ENCODE measurements at regions of chr10 and their contacts with region 1.

Region 1: GRCh38 chr10:31928549-31929260 is at the start of gene ARHGAP12:
- DNase-seq: peak; percentile 87
- H3K4me3 Mint-ChIP-seq: peak within 1 kb of the TSS; percentile 81
- H3K27ac Mint-ChIP-seq: peak within 1 kb of the TSS; percentile 51
- H3K4me1 Mint-ChIP-seq: peaks cover 42% of the 10 kb centered on the region
- H3K27me3 Mint-ChIP-seq: no peaks in the 10 kb centered on the region
- total RNA-seq, gene ARHGAP12: 4.0 to 4.5 TPM

Region 2: GRCh38 chr10:31101123-31101522 is 827.6 kb before region 1 on chr10:
- CTCF ChIA-PET with region 1: no interaction called
- POLR2A ChIA-PET with region 1: no interaction called
- intact Hi-C with region 1: no loop called
- DNase-seq: peak; percentile 89
- H3K4me3 Mint-ChIP-seq: peak overlapping the region; percentile 8
- H3K27ac Mint-ChIP-seq: peak overlapping the region; percentile 92
- H3K4me1 Mint-ChIP-seq: peaks cover 48% of the 10 kb centered on the region
- H3K27me3 Mint-ChIP-seq: no peaks in the 10 kb centered on the region

Region 3: DNA sequence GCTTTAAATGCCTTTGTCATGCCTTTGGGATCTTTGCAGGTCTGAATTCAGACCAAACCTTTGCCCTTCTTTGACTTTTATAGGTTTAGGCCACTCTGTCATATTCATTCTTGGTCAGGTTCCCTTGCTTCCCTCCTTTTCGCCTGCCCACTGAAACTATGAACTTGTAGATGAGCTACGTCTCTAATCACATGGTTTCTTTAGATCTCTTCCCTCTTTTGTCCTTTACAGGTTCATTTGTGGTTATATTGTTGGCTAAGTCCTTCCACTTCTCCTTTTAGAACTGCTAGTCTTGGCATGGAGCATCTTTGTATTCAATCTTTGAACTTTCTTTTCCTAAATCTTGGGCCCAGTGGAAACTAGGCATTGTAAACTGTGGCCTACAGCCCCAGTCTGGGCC is 713.7 kb before region 1 on chr10:
- CTCF ChIA-PET with region 1: no interaction called
- POLR2A ChIA-PET with region 1: no interaction called
- intact Hi-C with region 1: no loop called
- DNase-seq: no peak
- H3K4me3 Mint-ChIP-seq: no peak overlapping the region
- H3K27ac Mint-ChIP-seq: no peak overlapping the region
- H3K4me1 Mint-ChIP-seq: no peaks in the 10 kb centered on the region
- H3K27me3 Mint-ChIP-seq: no peaks in the 10 kb centered on the region

Region 4: DNA sequence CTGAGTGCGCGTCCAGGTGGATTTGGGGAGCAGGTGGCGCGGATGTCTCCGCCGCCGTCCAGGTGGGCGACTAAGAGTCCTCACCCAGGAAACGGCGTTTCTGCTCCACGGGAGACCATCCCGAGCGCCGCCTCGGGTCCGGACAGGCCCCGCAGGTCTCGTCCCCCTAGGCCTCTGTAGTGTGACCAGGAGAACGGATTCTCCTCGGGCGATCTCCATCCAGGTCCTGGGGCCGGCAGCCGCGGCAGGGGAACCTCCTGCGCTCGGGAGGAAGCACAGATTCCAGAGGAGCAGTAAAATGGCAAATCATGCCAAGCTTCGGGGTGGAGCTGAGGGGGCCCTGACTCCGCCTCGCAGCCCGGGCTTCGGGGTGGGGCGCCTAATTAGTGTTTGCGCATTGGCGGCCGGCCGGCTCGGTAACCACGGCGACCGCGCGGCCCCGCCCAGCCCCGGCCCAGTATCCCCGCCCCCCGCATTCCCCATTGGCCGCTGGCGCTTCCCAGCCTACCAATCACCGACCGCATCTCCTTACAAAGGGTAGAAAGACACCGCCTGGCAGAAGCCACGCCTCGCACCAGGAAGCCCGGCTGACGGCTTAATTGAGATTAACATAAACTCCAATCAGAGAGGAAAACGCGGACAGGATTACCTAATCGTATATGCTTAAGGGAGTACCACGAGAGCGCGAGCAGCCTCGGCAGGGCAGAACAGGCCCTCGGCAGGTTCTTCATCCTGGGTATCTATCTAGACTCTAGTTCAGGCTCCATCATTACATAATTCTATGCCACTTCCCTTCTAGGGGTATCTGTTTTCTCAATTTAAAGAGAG is 168.7 kb before region 1 on chr10:
- CTCF ChIA-PET with region 1: no interaction called
- POLR2A ChIA-PET with region 1: no interaction called
- intact Hi-C with region 1: loop called (anchors 10 kb)
- DNase-seq: peak; percentile 97
- H3K4me3 Mint-ChIP-seq: peak overlapping the region; percentile 96
- H3K27ac Mint-ChIP-seq: peak overlapping the region; percentile 91
- H3K4me1 Mint-ChIP-seq: peaks cover 10% of the 10 kb centered on the region
- H3K27me3 Mint-ChIP-seq: no peaks in the 10 kb centered on the region

Region 5: DNA sequence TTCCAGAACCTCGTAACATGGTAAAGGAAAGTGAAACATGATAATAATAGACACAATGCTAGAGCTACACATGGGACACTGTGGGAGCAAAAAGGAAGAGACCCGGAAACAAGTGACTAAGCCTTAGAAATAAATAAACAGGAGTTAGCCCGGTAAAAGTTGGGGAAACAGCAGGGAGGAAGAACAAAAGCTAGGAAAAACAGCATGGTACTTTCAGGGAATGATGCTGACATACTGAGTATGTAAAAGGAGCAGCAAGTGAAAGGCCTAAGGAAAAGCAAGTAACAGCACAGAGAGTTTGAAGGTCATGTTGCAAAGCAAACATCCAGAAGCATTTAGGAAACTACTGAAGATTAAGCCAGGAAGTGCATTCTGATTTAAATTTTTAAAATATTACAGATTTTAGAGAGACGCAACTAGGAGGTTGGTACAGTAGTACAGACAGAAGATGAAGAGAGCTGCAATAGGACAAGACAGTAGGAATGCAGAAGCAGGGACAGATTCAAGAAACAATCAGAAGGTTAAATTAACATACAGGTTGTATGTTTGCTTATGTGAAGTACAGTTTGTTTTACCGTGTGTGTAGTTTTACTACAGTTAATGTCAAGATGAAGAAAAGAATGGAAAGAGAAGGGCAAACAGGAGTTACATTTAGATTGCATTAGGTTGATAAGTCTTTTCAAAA is 63.7 kb before region 1 on chr10:
- CTCF ChIA-PET with region 1: interaction called, 16 read pairs
- POLR2A ChIA-PET with region 1: no interaction called
- intact Hi-C with region 1: loop called (anchors 5 kb)
- DNase-seq: no peak
- H3K4me3 Mint-ChIP-seq: no peak overlapping the region
- H3K27ac Mint-ChIP-seq: no peak overlapping the region
- H3K4me1 Mint-ChIP-seq: peaks cover 18% of the 10 kb centered on the region
- H3K27me3 Mint-ChIP-seq: no peaks in the 10 kb centered on the region

Region 6: DNA sequence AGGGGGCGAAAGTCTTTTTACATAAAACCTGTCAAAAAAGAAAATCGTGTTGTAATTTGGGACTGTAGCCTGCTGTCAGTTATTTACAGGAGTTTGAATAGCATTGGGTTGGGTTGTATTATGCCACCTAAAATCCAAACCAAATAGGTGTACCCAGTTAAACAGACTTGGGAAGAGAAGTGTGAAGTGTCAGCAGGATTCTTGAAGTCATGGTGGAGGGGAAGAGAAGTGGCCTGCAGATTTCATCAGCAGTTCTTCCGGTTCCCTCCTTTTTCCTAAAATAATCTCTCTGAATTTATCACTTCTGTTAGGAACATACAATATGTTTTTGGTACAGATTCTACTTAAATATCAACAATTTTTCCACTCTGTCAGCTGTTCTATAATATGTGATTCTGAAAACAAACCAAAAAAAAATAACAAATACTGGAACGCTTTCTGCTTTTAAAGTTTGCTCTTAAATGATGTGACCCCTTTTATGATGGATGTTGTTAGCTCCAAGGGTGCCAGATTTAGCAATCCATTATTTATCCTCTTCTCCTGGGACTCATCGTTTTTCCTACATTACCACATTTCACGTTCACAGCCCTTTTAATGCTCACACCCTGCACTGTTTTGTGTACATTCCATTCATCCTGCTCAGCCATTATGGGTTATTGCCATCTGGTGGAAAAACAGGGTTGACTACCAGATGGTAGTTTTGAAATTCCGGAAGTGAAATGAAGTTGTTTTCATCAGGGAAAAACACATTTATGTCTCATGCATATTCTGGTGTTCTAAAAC is 18.6 kb after region 1 on chr10:
- CTCF ChIA-PET with region 1: no interaction called
- POLR2A ChIA-PET with region 1: no interaction called
- intact Hi-C with region 1: no loop called
- DNase-seq: no peak
- H3K4me3 Mint-ChIP-seq: no peak overlapping the region
- H3K27ac Mint-ChIP-seq: no peak overlapping the region
- H3K4me1 Mint-ChIP-seq: peaks cover 3% of the 10 kb centered on the region
- H3K27me3 Mint-ChIP-seq: no peaks in the 10 kb centered on the region

Region 7: DNA sequence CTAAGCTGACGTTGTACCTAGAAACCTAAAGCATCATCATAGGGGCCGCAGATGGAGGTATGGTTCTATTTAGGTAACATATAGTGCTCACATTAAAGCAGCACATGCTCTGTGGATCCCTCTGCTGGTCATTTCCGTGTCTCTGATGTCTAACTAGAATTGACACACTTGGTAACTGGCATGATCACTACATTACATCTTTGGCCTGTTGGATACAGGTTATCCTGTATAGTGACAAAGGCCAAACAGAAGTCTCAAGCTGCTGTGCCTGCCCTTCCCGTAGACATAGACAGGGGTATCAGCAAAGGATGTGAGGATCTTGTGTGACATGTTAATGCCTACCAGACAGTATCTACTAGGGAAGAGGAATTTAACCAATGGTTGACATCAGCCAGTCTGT is 76.3 kb after region 1 on chr10:
- CTCF ChIA-PET with region 1: no interaction called
- POLR2A ChIA-PET with region 1: no interaction called
- intact Hi-C with region 1: loop called (anchors 1 kb)
- DNase-seq: peak; percentile 38
- H3K4me3 Mint-ChIP-seq: no peak overlapping the region
- H3K27ac Mint-ChIP-seq: no peak overlapping the region
- H3K4me1 Mint-ChIP-seq: peaks cover 4% of the 10 kb centered on the region
- H3K27me3 Mint-ChIP-seq: no peaks in the 10 kb centered on the region

Region 8: GRCh38 chr10:32055813-32056600 is 127.3 kb after region 1 on chr10 and contains the start of gene KIF5B:
- CTCF ChIA-PET with region 1: no interaction called
- POLR2A ChIA-PET with region 1: interaction called, 3 read pairs
- intact Hi-C with region 1: loop called (anchors 2 kb)
- DNase-seq: peak; percentile 90
- H3K4me3 Mint-ChIP-seq: peak within 1 kb of the TSS; percentile 96
- H3K27ac Mint-ChIP-seq: peak within 1 kb of the TSS; percentile 94
- H3K4me1 Mint-ChIP-seq: peaks cover 37% of the 10 kb centered on the region
- H3K27me3 Mint-ChIP-seq: no peaks in the 10 kb centered on the region
- total RNA-seq, gene KIF5B: 73.9 to 75.2 TPM

Region 9: DNA sequence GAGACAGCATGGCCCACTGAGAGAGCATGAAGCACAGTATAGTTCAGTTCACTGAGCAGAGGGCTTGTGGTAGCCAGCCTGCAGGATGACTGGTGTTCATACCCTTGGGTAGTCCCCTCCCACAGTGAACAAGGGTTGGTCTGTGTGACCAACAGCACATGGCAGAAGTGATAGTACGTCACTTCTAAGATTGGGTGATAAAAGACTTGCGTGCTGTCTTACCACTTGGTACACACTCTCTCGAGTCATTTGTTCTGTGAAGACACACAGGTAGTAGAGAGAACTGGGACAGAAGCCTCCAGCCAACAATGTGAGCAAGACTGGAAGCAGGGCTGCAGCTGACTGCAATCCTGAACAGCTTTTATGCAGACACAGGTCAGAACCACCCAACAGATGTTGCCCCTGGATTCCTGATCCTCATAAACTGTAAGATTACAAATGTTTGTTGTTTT is 403.6 kb after region 1 on chr10:
- CTCF ChIA-PET with region 1: no interaction called
- POLR2A ChIA-PET with region 1: no interaction called
- intact Hi-C with region 1: loop called (anchors 5 kb)
- DNase-seq: peak; percentile 90
- H3K4me3 Mint-ChIP-seq: peak overlapping the region; percentile 75
- H3K27ac Mint-ChIP-seq: peak overlapping the region; percentile 91
- H3K4me1 Mint-ChIP-seq: peaks cover 93% of the 10 kb centered on the region
- H3K27me3 Mint-ChIP-seq: no peaks in the 10 kb centered on the region